CD4-positive, alpha-beta T cell (primary cell): ENCODE measurements at regions of chr9 and their contacts with region 1.

Region 1: DNA sequence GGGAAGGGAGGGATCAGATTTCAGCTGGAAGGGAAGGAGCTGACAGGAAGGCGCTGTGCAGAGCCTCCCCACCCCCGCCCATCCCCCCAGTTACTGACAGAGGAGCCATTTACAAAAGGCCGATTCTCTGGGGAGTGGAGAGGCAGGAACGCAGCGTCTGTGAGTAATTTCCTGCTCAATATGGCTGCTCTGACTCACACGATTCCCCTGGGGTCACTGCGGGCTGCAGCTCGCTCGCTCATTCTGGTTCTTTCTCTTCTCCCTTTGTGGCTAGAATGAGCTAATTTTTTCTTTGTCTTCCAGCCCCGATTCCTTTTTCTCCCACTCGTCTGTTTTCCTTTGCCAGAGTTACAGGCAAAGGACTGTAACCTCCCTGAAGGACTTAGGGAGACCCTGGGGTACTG is 28.8 kb downstream of the PTPA start:
- DNase-seq: peak; percentile 53 to 92 (median 75)
- ATAC-seq: peak; percentile 87
- H3K4me3 ChIP-seq: peak overlapping the region; percentile 65
- H3K4me3 Mint-ChIP-seq: peak overlapping the region; percentile 88
- H3K27ac ChIP-seq: peak overlapping the region; percentile 95 to 96
- H3K27ac Mint-ChIP-seq: peak overlapping the region; percentile 89
- H3K4me1 ChIP-seq: peaks cover 44% of the 10 kb centered on the region
- H3K4me1 Mint-ChIP-seq: peaks cover 34% of the 10 kb centered on the region
- H3K27me3 ChIP-seq: no peaks in the 10 kb centered on the region
- H3K27me3 Mint-ChIP-seq: no peaks in the 10 kb centered on the region
- CTCF ChIP-seq: no peak

Region 2: DNA sequence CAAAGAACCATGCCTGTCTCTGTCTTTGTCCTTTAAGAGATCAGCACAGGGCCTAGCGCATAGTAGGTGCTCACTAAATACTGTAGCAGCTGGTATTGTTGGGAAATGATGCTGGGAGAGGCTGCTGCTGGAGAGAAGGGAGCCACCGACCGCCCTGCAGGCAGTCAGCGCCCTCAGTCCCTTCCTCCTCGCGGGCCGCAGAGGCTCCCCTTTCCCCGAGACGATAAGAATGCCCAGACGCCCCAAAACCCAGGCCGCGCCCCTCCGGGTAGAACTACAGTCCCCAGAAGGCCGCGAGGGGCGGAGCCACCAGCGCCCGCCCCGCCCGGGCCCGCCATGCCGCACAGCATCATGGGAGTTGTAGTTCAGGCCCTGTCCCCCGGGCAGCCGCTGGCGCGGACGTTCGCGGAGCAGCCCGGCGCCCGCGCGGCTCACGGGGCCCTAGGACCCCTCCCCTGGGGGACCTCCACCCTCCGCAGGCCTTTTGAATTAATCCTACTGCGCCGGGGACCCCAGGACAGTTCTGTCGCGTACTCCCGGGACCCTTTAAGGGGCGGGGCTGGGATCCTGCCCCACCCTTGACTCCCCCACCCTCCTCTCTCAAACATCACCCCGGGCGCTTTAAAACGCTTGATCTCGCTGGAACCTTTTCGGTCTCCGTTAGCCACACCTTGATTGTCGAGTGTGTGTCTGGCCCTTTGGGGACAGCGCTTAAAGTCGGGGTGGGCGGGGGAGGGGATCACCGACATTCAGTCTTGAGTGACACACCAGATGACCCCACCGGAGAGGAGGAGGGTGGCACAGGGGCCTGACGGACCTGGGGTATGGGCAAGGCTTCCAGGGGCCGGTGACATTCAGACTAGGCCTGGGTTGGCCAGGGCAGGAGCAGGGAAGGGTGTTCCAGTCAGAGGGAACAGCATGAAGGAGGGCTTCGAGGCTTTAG is 62.9 kb after region 1 on chr9:
- CTCF ChIA-PET with region 1: no interaction called
- POLR2A ChIA-PET with region 1: no interaction called
- intact Hi-C with region 1: loop called in 1 of 2 experiments (anchors 2 kb)
- DNase-seq: peak; percentile 84 to 95 (median 90)
- ATAC-seq: peak; percentile 93
- H3K4me3 ChIP-seq: peak overlapping the region; percentile 54
- H3K4me3 Mint-ChIP-seq: peak overlapping the region; percentile 83
- H3K27ac ChIP-seq: peak overlapping the region in 1 of 2 donors; percentile 41
- H3K27ac Mint-ChIP-seq: peak overlapping the region; percentile 67
- H3K4me1 ChIP-seq: peaks cover 33% of the 10 kb centered on the region
- H3K4me1 Mint-ChIP-seq: peaks cover 18% of the 10 kb centered on the region
- H3K27me3 ChIP-seq: no peaks in the 10 kb centered on the region
- H3K27me3 Mint-ChIP-seq: no peaks in the 10 kb centered on the region
- CTCF ChIP-seq: no peak

Region 3: DNA sequence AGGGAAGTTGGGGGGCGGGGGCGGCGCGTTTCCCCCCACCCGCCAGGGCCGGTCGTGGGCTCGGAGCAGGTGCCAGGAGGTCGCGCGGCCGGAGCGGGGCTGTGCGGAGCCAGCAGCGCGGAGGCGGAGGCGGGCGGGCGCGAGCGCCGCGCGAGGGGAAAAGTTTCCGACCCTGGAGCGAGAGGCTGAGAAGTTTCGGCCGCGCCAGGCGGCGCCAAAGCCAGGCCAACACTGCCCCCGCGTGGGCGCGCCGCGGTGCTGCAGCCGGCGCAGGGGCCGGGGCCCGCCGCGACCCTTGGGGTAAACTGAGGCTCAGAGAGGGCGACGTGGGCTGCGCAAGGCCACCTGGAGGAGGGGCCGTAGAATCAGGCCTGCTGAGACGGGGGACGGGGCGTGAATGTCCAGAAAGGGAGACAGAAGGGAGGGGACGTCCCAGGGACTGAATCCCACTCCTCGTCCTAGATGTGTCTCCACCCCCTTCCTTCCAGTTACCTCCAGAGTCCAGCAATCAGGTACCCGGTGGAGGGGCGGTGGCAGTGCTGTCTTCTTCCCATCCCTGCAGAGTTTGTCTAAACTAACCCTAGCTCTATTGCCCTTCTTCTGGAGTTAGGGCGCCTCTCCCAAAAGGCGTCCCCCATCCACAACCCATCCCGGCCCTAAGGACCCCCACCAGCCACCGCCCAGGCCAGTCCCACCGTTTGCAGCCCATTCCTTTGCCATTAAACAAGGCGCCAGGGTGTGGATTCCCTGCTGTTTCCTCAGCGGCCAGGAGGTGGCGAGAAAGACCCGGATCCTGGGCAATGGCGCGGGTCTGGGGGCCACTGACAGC is 470.7 kb after region 1 on chr9:
- CTCF ChIA-PET with region 1: interaction called, 9 read pairs
- POLR2A ChIA-PET with region 1: interaction called, 17 read pairs
- intact Hi-C with region 1: loop called (anchors 1 kb)
- DNase-seq: peak; percentile 61 to 86 (median 66)
- ATAC-seq: peak; percentile 60
- H3K4me3 ChIP-seq: peak overlapping the region; percentile 51
- H3K4me3 Mint-ChIP-seq: peak overlapping the region; percentile 87
- H3K27ac ChIP-seq: no peak overlapping the region
- H3K27ac Mint-ChIP-seq: peak overlapping the region; percentile 76
- H3K4me1 ChIP-seq: peaks cover 48% of the 10 kb centered on the region
- H3K4me1 Mint-ChIP-seq: peaks cover 43% of the 10 kb centered on the region
- H3K27me3 ChIP-seq: peaks cover 0 to 5% of the 10 kb centered on the region in 2 experiments
- H3K27me3 Mint-ChIP-seq: no peaks in the 10 kb centered on the region
- CTCF ChIP-seq: peak; percentile 88

Region 4: DNA sequence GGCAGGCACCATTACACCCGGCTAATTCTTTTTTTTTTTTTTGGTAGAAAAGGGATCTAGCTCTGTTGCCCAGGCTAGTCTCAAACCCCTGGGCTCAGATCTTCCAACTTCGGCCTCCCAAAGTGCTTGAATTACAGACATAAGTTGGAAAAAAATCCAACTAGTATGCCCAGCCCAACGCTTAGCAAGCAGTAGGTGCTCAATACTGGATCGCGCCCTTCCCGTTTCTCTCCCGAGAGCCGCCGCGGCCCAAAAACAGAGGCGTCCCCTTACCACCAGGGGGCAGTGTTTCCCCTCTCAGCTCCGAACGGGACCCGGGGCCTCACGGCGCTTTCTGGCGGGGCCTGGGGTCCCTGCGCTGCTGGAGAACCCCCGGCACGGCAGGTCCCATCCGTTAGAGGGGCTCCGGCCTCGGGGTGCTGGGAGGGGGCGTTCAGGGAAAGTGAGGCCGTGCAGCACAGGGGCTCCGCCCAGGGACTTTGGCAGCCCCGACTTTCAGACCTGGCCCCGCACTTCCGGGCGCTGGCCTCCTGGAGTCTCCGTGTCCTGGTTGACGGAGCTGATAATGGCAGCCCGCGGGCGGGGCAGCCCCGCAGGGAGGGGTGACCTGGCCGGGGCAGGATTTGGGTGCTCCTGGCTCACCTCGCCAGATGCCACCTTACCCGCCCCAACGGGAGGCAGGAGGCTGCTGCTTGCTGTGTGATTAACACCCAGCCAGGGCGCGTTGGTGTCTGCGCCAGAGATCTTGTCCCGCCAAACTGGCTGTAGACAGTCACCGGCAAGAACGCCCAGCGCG is 597.7 kb after region 1 on chr9:
- CTCF ChIA-PET with region 1: interaction called, 4 read pairs
- POLR2A ChIA-PET with region 1: interaction called, 6 read pairs
- intact Hi-C with region 1: loop called in 1 of 2 experiments (anchors 5 kb)
- DNase-seq: peak; percentile 76 to 93 (median 85)
- ATAC-seq: peak; percentile 92
- H3K4me3 ChIP-seq: peak overlapping the region; percentile 76
- H3K4me3 Mint-ChIP-seq: peak overlapping the region; percentile 69
- H3K27ac ChIP-seq: peak overlapping the region; percentile 13 to 59
- H3K27ac Mint-ChIP-seq: peak overlapping the region; percentile 24
- H3K4me1 ChIP-seq: peaks cover 16% of the 10 kb centered on the region
- H3K4me1 Mint-ChIP-seq: no peaks in the 10 kb centered on the region
- H3K27me3 ChIP-seq: peaks cover 0 to 4% of the 10 kb centered on the region in 2 experiments
- H3K27me3 Mint-ChIP-seq: peaks cover 4% of the 10 kb centered on the region
- CTCF ChIP-seq: peak; percentile 96

Region 5: GRCh38 chr9:130235897-130236668 is 1096.1 kb after region 1 on chr9:
- CTCF ChIA-PET with region 1: no interaction called
- POLR2A ChIA-PET with region 1: no interaction called
- intact Hi-C with region 1: loop called in 1 of 2 experiments (anchors 10 kb)
- DNase-seq: peak; percentile 52 to 82 (median 64)
- ATAC-seq: peak; percentile 40
- H3K4me3 ChIP-seq: no peak overlapping the region
- H3K4me3 Mint-ChIP-seq: peak overlapping the region; percentile 34
- H3K27ac ChIP-seq: no peak overlapping the region
- H3K27ac Mint-ChIP-seq: no peak overlapping the region
- H3K4me1 ChIP-seq: peaks cover 30% of the 10 kb centered on the region
- H3K4me1 Mint-ChIP-seq: peaks cover 22% of the 10 kb centered on the region
- H3K27me3 ChIP-seq: no peaks in the 10 kb centered on the region
- H3K27me3 Mint-ChIP-seq: no peaks in the 10 kb centered on the region
- CTCF ChIP-seq: peak; percentile 98